HepG2 (cell line): ENCODE measurements at regions of chr4 and their contacts with region 1.

Region 1: GRCh38 chr4:104064646-104065577 is 345.1 kb upstream of the TACR3 start:
- DNase-seq: peak; percentile 39
- ATAC-seq: peak; percentile 94
- H3K4me3 ChIP-seq: no peak overlapping the region
- H3K27ac ChIP-seq: no peak overlapping the region
- H3K4me1 ChIP-seq: no peaks in the 10 kb centered on the region
- H3K27me3 ChIP-seq: no peaks in the 10 kb centered on the region
- CTCF ChIP-seq: peak; percentile 69
- EP300 ChIP-seq: no peak
- POLR2A ChIP-seq: no peak
- RAD21 ChIP-seq: peak; percentile 56

Region 2: DNA sequence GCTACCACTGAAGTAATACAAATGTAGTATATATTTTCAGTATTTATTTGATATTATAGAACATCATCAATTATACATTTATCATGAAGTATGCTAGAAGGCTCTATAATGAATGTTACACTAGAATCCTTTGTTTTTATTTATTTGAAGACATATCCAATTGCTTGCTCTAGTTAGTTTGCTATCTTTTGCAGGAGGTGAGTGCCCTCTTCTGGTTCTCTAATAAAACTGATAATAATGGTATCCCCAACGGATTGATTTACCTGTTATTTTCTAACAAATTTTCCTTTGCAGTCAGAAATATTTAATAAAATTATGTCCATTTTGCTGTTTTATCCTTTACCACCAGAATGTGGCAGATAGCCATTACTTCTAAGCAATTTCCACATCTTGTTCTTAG is 70.9 kb before region 1 on chr4:
- CTCF ChIA-PET with region 1: no interaction called
- POLR2A ChIA-PET with region 1: no interaction called
- in situ Hi-C with region 1: no loop called
- intact Hi-C with region 1: no loop called
- DNase-seq: peak; percentile 10
- ATAC-seq: no peak
- H3K4me3 ChIP-seq: no peak overlapping the region
- H3K27ac ChIP-seq: no peak overlapping the region
- H3K4me1 ChIP-seq: no peaks in the 10 kb centered on the region
- H3K27me3 ChIP-seq: no peaks in the 10 kb centered on the region
- CTCF ChIP-seq: no peak
- EP300 ChIP-seq: no peak
- POLR2A ChIP-seq: no peak
- RAD21 ChIP-seq: no peak

Region 3: DNA sequence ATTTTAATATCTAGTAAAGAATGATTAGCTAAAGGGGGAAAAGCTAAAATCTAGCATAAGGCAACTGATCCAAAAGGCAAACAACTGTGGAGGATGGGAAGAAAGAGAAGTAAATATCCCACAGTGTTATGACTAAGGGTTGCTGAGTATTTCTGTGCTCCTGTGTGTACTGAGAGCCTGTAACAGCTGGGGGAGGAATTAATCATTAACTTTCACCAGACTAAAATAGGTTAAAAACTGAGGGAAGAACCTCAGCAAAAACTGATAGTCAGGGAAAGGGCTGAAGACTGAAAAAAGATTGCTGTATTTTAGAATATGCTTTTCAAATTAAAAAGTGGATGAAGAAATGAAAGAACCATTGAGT is 63.9 kb after region 1 on chr4:
- CTCF ChIA-PET with region 1: no interaction called
- POLR2A ChIA-PET with region 1: no interaction called
- in situ Hi-C with region 1: no loop called
- intact Hi-C with region 1: loop called (anchors 2 kb)
- DNase-seq: peak; percentile 87
- ATAC-seq: peak; percentile 100
- H3K4me3 ChIP-seq: peak overlapping the region in 2 of 3 experiments; percentile 28 to 33; a peak in 2 of 6 replicates
- H3K27ac ChIP-seq: peak overlapping the region; percentile 45
- H3K4me1 ChIP-seq: peaks cover 23% of the 10 kb centered on the region
- H3K27me3 ChIP-seq: no peaks in the 10 kb centered on the region; a peak in 1 of 5 replicates
- CTCF ChIP-seq: no peak
- EP300 ChIP-seq: peak in 1 of 2 experiments; percentile 76; a peak in 2 of 4 replicates
- POLR2A ChIP-seq: no peak
- RAD21 ChIP-seq: no peak

Region 4: DNA sequence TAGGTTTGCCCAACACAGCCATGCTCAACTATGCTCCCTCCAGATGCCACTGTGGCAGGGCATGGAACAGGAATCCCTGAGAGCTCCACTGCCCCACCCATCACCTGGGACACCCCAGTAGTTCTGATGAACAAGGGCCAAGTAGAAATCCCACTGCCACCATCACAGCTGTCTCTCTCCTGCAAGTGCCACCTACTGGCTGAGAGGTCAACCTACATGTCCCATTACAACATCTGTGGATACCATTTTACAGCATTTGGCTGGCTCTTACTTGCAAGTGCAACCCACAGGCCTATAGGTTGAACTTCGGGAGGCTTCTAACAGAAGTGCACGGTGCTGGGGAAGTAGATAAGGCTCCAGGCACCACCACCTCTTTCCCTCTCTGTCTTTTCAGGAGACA is 287.3 kb after region 1 on chr4:
- CTCF ChIA-PET with region 1: no interaction called
- POLR2A ChIA-PET with region 1: no interaction called
- in situ Hi-C with region 1: no loop called
- intact Hi-C with region 1: loop called (anchors 10 kb)
- DNase-seq: peak; percentile 4
- ATAC-seq: peak; percentile 46; the same call in 2 of the 3 replicates
- H3K4me3 ChIP-seq: no peak overlapping the region
- H3K27ac ChIP-seq: no peak overlapping the region
- H3K4me1 ChIP-seq: no peaks in the 10 kb centered on the region
- H3K27me3 ChIP-seq: no peaks in the 10 kb centered on the region
- CTCF ChIP-seq: peak; percentile 20; the same call in 1 of the 2 replicates
- EP300 ChIP-seq: no peak
- POLR2A ChIP-seq: no peak
- RAD21 ChIP-seq: no peak

Region 5: GRCh38 chr4:104451573-104451972 is 386.7 kb after region 1 on chr4:
- CTCF ChIA-PET with region 1: no interaction called
- POLR2A ChIA-PET with region 1: no interaction called
- in situ Hi-C with region 1: no loop called
- intact Hi-C with region 1: loop called (anchors 1 kb)
- DNase-seq: no peak
- ATAC-seq: peak; percentile 70
- H3K4me3 ChIP-seq: no peak overlapping the region
- H3K27ac ChIP-seq: no peak overlapping the region
- H3K4me1 ChIP-seq: no peaks in the 10 kb centered on the region
- H3K27me3 ChIP-seq: no peaks in the 10 kb centered on the region
- CTCF ChIP-seq: 0 out of 2 replicates have a peak, but pooled peaks have one; percentile 5
- EP300 ChIP-seq: no peak
- POLR2A ChIP-seq: no peak
- RAD21 ChIP-seq: no peak

Region 6: DNA sequence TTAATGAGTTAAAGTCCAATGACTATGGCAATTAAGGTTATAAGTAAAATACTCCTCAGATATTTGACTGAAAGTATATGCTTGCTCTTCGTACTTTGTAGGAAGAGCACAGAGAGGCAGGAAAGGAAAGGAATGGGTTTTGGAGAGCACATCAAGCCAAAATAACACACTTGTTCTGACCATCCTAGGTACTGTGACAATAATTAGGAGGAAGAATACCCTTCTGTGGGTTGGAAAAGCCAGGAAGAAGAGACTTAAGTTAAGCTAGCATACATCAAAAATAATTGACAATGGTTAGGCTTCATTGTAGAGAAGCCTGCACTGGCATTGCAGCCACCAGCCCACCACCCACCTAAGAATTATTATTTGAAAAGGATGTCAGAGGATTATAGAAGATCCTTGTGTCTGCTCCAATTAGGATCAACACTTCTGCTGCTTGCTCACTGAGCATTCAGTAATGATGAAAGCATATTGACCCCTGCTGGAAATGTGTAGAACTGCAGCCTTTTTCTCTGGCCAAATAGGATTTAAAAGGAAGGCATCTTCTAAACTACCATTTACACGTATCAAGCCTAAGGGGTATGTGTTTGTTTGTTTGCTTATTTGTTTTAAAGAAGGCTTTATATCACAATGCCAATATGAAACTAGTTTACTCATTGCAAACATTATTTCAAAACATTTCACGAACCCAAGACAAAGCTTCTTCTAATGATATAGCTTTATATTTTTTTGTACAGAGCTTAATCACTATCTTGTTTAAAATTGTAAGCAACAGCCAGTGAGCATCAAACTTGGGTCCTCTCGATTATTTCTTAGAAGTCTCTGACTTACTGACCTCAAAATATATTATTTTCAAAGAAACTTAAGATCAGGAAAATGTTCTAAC is 795.6 kb after region 1 on chr4:
- CTCF ChIA-PET with region 1: interaction called, 14 read pairs
- POLR2A ChIA-PET with region 1: no interaction called
- in situ Hi-C with region 1: loop called (anchors 5 kb)
- intact Hi-C with region 1: loop called (anchors 1 kb)
- DNase-seq: peak; percentile 62
- ATAC-seq: peak; percentile 81
- H3K4me3 ChIP-seq: no peak overlapping the region
- H3K27ac ChIP-seq: no peak overlapping the region
- H3K4me1 ChIP-seq: no peaks in the 10 kb centered on the region
- H3K27me3 ChIP-seq: no peaks in the 10 kb centered on the region
- CTCF ChIP-seq: peak; percentile 84
- EP300 ChIP-seq: no peak
- POLR2A ChIP-seq: no peak
- RAD21 ChIP-seq: peak; percentile 61